ENCODE measurements at regions of chr20 and their contacts with region 1.

Region 1: GRCh38 chr20:32652739-32653526 is 20.8 kb downstream of the C20orf203 start:
- DNase-seq: peak; percentile 94 to 97
- H3K4me3 ChIP-seq: no peak overlapping the region
- H3K4me3 Mint-ChIP-seq: no peak overlapping the region
- H3K27ac Mint-ChIP-seq: no peak overlapping the region
- H3K4me1 ChIP-seq: no peaks in the 10 kb centered on the region
- H3K4me1 Mint-ChIP-seq: no peaks in the 10 kb centered on the region
- H3K27me3 ChIP-seq: no peaks in the 10 kb centered on the region
- H3K27me3 Mint-ChIP-seq: no peaks in the 10 kb centered on the region
- CTCF ChIP-seq: peak; percentile 100

Region 2: GRCh38 chr20:31822421-31823330 is 830.3 kb before region 1 on chr20:
- CTCF ChIA-PET with region 1: no interaction called
- POLR2A ChIA-PET with region 1: no interaction called
- intact Hi-C with region 1: loop called (anchors 1 kb)
- DNase-seq: peak; percentile 80 to 92
- H3K4me3 ChIP-seq: no peak overlapping the region
- H3K4me3 Mint-ChIP-seq: no peak overlapping the region
- H3K27ac Mint-ChIP-seq: no peak overlapping the region
- H3K4me1 ChIP-seq: no peaks in the 10 kb centered on the region
- H3K4me1 Mint-ChIP-seq: no peaks in the 10 kb centered on the region
- H3K27me3 ChIP-seq: no peaks in the 10 kb centered on the region
- H3K27me3 Mint-ChIP-seq: no peaks in the 10 kb centered on the region
- CTCF ChIP-seq: peak; percentile 100

Region 3: DNA sequence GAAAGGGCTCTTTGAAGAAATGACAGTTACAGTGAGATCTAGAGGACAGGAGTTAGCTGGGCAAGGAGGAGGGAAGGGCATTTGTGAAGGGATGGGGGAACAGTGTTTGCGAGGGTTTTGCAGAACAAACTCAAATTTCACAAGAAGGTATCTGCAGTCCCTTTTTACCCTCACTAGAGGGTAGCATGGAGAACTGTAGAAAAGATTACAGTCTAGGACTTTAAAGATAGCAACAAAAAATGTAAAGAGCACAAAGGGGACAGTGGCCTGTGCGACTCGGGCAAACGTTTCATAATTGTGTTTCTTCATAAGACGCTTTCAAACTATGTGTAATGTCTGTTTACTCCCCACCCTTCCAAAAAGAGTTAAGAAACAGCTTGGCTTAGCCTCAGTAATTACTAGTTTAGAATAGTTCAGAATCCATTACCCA is 316.0 kb before region 1 on chr20:
- CTCF ChIA-PET with region 1: no interaction called
- POLR2A ChIA-PET with region 1: no interaction called
- intact Hi-C with region 1: loop called (anchors 5 kb)
- DNase-seq: peak in 1 of 2 experiments; percentile 78
- H3K4me3 ChIP-seq: no peak overlapping the region
- H3K4me3 Mint-ChIP-seq: no peak overlapping the region
- H3K27ac Mint-ChIP-seq: no peak overlapping the region
- H3K4me1 ChIP-seq: peaks cover 8% of the 10 kb centered on the region; the same call in 1 of the 2 replicates
- H3K4me1 Mint-ChIP-seq: peaks cover 16% of the 10 kb centered on the region
- H3K27me3 ChIP-seq: no peaks in the 10 kb centered on the region
- H3K27me3 Mint-ChIP-seq: no peaks in the 10 kb centered on the region
- CTCF ChIP-seq: peak; percentile 93 to 95

Region 4: DNA sequence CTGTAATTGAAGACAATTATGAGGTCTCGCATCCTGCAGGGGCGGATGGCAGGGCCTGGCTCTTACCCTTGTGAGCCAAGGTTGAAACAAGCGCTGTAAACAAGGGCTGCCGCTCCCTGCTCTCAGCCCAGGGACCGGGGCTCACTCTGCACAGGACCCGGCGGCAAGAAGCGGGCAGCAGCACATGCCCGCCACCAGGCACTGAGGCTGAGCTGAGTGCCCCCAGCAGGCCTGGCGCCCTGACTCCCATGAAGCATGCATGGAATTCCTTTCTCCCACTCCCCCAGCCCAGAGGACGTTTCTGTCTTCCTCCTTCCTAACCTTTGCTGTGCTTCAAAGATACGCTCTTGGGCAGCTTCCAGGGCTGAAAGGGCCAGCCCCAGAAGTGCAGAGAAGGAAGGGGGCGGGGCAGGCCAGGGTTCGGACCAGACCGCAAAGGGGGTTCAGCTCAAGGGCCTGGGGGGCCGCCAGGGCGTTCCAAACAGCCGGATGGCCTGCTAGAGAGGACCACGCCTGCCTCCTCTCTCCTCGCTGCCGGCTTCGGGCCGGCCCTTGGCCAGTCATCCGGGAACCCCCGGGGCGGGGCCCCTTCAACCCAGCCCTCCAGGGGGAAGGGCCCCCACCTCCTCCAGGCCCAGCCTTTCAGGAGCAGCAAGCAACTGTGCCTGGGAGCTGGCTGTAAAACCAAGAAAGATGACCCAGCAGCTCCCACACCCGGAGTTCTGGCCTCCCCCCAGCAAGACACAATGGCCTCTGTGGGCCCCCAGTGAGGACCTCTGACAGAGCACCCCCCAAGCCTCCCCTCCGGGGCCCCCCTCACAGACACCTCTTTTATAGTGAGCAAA is 177.7 kb before region 1 on chr20:
- CTCF ChIA-PET with region 1: interaction called, 10 read pairs
- POLR2A ChIA-PET with region 1: no interaction called
- intact Hi-C with region 1: loop called (anchors 1 kb)
- DNase-seq: peak; percentile 99 to 100
- H3K4me3 ChIP-seq: peak overlapping the region; percentile 42
- H3K4me3 Mint-ChIP-seq: peak overlapping the region; percentile 93
- H3K27ac Mint-ChIP-seq: peak overlapping the region; percentile 93
- H3K4me1 ChIP-seq: peaks cover 79% of the 10 kb centered on the region
- H3K4me1 Mint-ChIP-seq: peaks cover 69% of the 10 kb centered on the region
- H3K27me3 ChIP-seq: no peaks in the 10 kb centered on the region
- H3K27me3 Mint-ChIP-seq: no peaks in the 10 kb centered on the region
- CTCF ChIP-seq: peak in 1 of 2 experiments; percentile 18

Region 5: DNA sequence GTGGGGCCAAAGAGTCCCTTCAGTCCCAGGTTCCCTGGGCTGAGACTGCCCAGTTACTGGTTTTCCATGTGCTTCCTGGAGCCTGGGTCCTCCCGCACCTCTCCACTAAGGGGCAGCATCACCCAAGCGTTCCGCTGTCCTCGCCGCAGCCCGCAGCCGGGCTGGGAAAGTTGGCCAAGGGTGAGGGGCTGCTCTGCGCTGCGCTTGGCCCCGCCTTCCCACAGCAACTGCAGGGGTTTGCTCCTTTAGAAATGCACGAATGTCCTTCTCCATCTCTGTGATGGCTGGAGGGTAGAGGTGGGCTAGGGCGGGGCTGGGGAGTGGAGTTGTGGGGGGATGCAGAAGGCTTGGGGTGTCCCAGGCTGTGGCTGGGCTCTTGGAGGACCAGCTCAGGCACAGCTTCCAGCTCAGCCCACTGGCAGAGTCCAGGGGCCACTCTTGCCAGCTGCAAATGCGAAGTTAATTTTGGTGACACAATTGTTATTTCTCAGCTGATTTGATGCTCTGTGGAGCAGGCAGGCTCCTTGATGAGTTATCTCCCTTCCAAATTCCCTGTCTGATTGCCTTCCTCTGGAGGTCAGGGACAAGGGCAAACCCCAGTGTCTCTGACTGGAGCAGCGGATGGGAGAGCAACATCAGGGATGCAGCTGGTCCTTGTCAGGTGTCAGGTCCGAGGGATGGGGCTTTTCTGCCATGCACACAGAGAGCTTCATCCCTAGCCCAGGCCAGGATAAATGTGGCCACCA is 131.0 kb before region 1 on chr20:
- CTCF ChIA-PET with region 1: interaction called, 155 read pairs
- POLR2A ChIA-PET with region 1: interaction called, 3 read pairs
- intact Hi-C with region 1: loop called (anchors 1 kb)
- DNase-seq: peak; percentile 87 to 94
- H3K4me3 ChIP-seq: no peak overlapping the region
- H3K4me3 Mint-ChIP-seq: no peak overlapping the region
- H3K27ac Mint-ChIP-seq: no peak overlapping the region
- H3K4me1 ChIP-seq: no peaks in the 10 kb centered on the region; the same call in 1 of the 2 replicates
- H3K4me1 Mint-ChIP-seq: no peaks in the 10 kb centered on the region
- H3K27me3 ChIP-seq: no peaks in the 10 kb centered on the region
- H3K27me3 Mint-ChIP-seq: no peaks in the 10 kb centered on the region
- CTCF ChIP-seq: peak; percentile 98 to 99

Region 6: GRCh38 chr20:32638848-32639247 is 14.1 kb before region 1 on chr20:
- CTCF ChIA-PET with region 1: interaction called, 11 read pairs
- POLR2A ChIA-PET with region 1: no interaction called
- intact Hi-C with region 1: no loop called
- DNase-seq: peak in 1 of 2 experiments; percentile 51
- H3K4me3 ChIP-seq: no peak overlapping the region
- H3K4me3 Mint-ChIP-seq: no peak overlapping the region
- H3K27ac Mint-ChIP-seq: no peak overlapping the region
- H3K4me1 ChIP-seq: no peaks in the 10 kb centered on the region
- H3K4me1 Mint-ChIP-seq: no peaks in the 10 kb centered on the region
- H3K27me3 ChIP-seq: no peaks in the 10 kb centered on the region
- H3K27me3 Mint-ChIP-seq: peaks cover 2% of the 10 kb centered on the region
- CTCF ChIP-seq: peak in 1 of 2 experiments; percentile 3

Region 7: GRCh38 chr20:32855387-32855786 is 202.5 kb after region 1 on chr20:
- CTCF ChIA-PET with region 1: no interaction called
- POLR2A ChIA-PET with region 1: no interaction called
- intact Hi-C with region 1: no loop called
- DNase-seq: no peak
- H3K4me3 ChIP-seq: no peak overlapping the region
- H3K4me3 Mint-ChIP-seq: no peak overlapping the region
- H3K27ac Mint-ChIP-seq: no peak overlapping the region
- H3K4me1 ChIP-seq: no peaks in the 10 kb centered on the region
- H3K4me1 Mint-ChIP-seq: no peaks in the 10 kb centered on the region
- H3K27me3 ChIP-seq: no peaks in the 10 kb centered on the region
- H3K27me3 Mint-ChIP-seq: no peaks in the 10 kb centered on the region
- CTCF ChIP-seq: no peak